ENCODE measurements at regions of chr1 and their contacts with region 1.

Region 1: GRCh38 chr1:61097317-61097716 is 15.0 kb downstream of the NFIA start:
- DNase-seq: no peak
- ATAC-seq: no peak
- H3K4me3 ChIP-seq: no peak overlapping the region
- H3K27ac ChIP-seq: peak overlapping the region in 1 of 2 donors; percentile 16
- H3K4me1 ChIP-seq: peaks cover 0 to 4% of the 10 kb centered on the region in 2 donors
- H3K27me3 ChIP-seq: no peaks in the 10 kb centered on the region

Region 2: DNA sequence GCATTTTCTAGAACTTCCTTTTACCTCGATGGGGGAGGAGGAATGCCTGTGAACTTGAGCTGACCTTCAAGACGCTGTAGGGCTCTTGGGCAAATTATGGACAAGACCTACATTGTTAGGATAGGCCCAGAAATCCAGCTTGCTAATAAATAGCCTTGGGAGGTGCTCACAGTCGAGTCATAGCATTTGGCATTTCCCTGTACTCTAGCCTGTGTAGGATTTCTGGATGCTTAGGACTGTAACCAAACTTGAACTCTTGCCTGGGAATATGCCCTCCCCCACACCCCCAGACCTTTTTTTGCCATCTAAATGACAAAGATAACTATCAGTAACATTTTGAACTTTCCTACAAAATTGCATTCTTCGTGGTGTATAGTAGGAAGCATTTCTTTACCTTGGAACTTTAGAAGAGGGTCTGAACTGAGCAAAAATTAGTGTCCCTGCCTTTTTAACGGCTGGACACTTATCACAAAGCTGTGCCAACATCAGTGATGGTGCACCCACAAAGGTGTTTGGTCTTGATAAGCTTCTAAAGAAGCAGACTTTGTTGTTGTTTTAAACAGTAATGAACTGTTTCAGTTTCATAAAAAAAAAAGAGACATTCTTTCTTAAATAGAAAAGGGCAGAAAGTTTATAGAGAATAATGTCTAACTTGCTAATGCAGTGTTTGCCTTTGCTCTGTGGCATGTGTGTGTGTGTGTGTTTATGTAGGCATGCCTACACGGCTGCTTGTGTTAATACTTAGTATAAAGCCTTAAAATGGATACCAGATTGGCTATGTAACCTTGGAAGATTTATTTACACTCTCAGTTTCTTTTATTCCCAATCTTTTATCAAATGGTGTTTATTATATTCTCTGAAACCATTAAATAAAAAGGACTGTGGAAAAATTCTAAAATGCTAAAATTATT is 73.3 kb after region 1 on chr1:
- intact Hi-C with region 1: loop called in 1 of 2 experiments (anchors 5 kb)
- DNase-seq: no peak
- ATAC-seq: no peak
- H3K4me3 ChIP-seq: no peak overlapping the region
- H3K27ac ChIP-seq: peak overlapping the region; percentile 79 to 86
- H3K4me1 ChIP-seq: peaks cover 9 to 19% of the 10 kb centered on the region in 2 donors
- H3K27me3 ChIP-seq: no peaks in the 10 kb centered on the region

Region 3: DNA sequence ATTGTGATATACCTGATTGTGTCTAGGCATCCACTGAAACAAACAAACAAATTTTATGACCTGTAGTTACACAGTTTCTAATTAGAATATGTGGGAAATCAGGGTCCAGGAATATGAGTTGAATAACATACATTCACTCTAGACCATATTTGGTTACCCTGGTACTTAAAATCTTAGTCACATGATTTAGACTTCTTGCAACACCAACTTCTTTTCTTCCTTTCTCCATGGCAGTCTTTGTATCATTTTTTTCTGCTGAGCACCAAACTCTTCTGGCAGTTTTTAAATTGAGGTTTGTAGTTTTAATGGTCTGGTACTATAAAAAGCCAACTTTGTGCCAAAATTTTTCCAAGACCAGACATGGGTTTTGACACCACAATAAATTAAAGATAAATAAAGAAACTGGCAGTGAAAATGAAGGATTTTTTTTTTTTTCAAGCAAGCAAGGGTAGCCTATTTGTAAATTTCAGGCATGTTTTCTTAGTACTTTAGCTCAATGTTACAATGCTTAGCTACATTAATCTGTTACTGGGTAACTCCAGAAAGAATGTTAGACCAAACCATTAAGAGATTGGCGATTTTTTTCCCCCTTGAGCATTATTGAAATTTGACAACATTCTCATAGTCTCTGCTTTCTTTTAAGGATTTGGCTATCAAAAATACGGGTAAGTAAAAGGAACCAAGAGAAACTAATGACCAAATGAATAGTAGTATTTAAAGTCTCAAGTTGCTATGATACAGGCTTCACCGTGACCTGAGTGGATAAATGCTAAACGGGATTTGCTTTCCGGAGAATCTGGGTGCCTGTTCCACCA is 93.5 kb after region 1 on chr1:
- intact Hi-C with region 1: loop called in 1 of 2 experiments (anchors 5 kb)
- DNase-seq: no peak
- ATAC-seq: peak; percentile 48
- H3K4me3 ChIP-seq: peak overlapping the region in 1 of 2 donors; percentile 18
- H3K27ac ChIP-seq: peak overlapping the region; percentile 69 to 93
- H3K4me1 ChIP-seq: peaks cover 6 to 8% of the 10 kb centered on the region in 2 donors
- H3K27me3 ChIP-seq: no peaks in the 10 kb centered on the region

Region 4: GRCh38 chr1:61210435-61211154 is 113.3 kb after region 1 on chr1:
- intact Hi-C with region 1: no loop called
- DNase-seq: no peak
- ATAC-seq: peak; percentile 39
- H3K4me3 ChIP-seq: no peak overlapping the region
- H3K27ac ChIP-seq: peak overlapping the region; percentile 12 to 43
- H3K4me1 ChIP-seq: peaks cover 6 to 9% of the 10 kb centered on the region in 2 donors
- H3K27me3 ChIP-seq: no peaks in the 10 kb centered on the region

Region 5: DNA sequence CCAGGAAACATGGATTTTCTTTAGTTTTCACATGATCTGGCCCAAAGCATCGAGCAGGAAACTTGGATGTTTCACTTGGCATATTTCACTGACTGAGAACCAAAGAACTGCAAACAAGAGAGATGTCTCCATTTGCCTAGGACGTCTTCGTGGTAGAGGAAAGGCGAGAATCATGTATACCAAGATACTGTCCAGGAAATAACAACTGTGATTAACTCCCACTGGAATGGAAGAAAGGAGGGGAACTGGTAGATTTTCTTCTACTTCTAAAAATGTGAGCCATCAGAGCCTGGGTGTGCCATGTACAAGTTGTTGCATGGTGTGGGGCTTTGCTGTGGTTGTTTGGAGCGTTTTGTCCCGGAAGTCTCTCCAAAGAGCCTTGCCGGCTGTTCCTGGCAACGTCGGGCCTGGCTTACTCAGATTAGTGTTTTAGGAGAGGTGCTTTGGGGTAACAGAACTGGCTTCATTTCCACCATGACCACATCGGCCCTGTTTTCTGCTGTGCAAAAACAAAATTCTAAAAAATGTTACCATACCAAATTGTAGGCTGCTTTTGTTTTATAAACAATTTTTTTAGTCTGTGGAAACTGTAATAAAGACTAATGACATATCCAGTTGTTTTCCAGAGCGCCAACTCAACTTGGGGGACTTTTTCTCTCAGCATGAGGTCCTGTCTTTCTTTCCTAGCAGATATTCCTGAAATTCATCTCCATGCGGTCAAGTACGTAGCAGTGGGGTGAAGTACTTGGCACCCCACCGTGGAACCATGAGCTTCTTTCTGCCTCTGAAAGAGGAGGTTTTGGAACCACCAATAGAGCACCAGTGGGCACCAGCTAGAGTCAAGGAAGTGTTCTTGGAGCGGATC is 509.4 kb after region 1 on chr1:
- intact Hi-C with region 1: no loop called
- DNase-seq: peak; percentile 87 to 90
- ATAC-seq: peak; percentile 92
- H3K4me3 ChIP-seq: no peak overlapping the region
- H3K27ac ChIP-seq: peak overlapping the region; percentile 94 to 99
- H3K4me1 ChIP-seq: peaks cover 2 to 7% of the 10 kb centered on the region in 2 donors
- H3K27me3 ChIP-seq: no peaks in the 10 kb centered on the region